Heart left ventricle (tissue), 16 donors: ENCODE measurements at regions of chr11 and their contacts with region 1.

Region 1: GRCh38 chr11:363948-364761 is 5.1 kb upstream of the B4GALNT4 start:
- DNase-seq: no peak
- ATAC-seq: peak in 3 of 4 donors; percentile 23 to 46 (median 24)
- H3K4me3 ChIP-seq: no peak overlapping the region
- H3K27ac ChIP-seq: no peak overlapping the region
- H3K4me1 ChIP-seq: peaks cover 0 to 11% (median 6%) of the 10 kb centered on the region in 12 donors
- H3K27me3 ChIP-seq: peaks cover 11 to 62% (median 42%) of the 10 kb centered on the region in 9 donors
- CTCF ChIP-seq: peak in 1 of 12 donors; percentile 19
- POLR2A ChIP-seq: no peak

Region 2: DNA sequence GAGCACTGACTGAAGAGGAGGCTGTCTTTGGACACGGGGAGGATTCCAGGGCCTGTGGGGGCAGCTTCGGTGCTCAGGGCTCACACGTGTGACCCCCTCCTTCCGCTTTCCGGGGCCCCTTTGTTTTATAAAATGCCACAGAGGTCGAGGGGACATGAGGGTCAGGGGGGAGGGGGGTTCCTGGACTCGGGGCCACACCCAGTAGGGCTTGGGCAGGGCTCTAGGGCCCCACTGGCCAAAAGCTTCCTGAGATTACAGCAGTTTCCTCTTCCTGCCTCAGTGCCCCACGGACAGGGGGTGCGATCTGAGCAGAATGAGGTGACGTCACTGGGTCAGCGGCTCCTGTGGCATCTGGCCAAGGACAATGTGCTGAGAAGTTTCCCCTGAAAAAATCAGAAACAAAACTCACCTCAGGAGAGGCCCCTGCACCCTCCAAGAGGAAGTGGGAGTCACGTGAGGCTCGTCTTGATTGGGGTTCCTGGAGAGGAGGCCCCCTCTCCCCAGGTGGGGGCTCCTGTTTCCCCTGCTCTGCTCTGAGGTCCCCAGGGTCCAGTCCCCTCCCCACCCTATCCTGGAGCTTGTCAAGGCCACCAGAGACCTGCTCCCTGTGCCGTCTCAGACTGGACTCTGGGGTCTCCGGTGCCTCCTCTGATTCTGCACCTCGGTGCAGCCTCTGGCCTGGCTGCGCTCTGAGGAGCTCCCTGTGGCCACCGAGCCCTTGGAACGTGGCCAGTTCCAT is 37.1 kb before region 1 on chr11:
- intact Hi-C with region 1: no loop called
- DNase-seq: peak; percentile 89 to 92 (median 90)
- ATAC-seq: peak; percentile 84 to 95 (median 90)
- H3K4me3 ChIP-seq: peak overlapping the region in 9 of 12 donors; percentile 4 to 31 (median 27)
- H3K27ac ChIP-seq: peak overlapping the region; percentile 89 to 99 (median 94)
- H3K4me1 ChIP-seq: peaks cover 3 to 76% (median 34%) of the 10 kb centered on the region in 12 donors
- H3K27me3 ChIP-seq: no peaks in the 10 kb centered on the region
- CTCF ChIP-seq: peak in 1 of 12 donors; percentile 4
- POLR2A ChIP-seq: peak in 1 of 2 donors; percentile 33

Region 3: GRCh38 chr11:416757-417621 is 52.8 kb after region 1 on chr11:
- intact Hi-C with region 1: no loop called
- DNase-seq: peak; percentile 60 to 83 (median 66)
- ATAC-seq: peak in 3 of 4 donors; percentile 65 to 67 (median 66)
- H3K4me3 ChIP-seq: peak overlapping the region; percentile 48 to 80 (median 64)
- H3K27ac ChIP-seq: peak overlapping the region; percentile 76 to 97 (median 92)
- H3K4me1 ChIP-seq: peaks cover 0 to 31% (median 13%) of the 10 kb centered on the region in 12 donors
- H3K27me3 ChIP-seq: peaks cover 4 to 60% (median 30%) of the 10 kb centered on the region in 9 donors
- CTCF ChIP-seq: no peak
- POLR2A ChIP-seq: peak in 1 of 2 donors; percentile 29

Region 4: DNA sequence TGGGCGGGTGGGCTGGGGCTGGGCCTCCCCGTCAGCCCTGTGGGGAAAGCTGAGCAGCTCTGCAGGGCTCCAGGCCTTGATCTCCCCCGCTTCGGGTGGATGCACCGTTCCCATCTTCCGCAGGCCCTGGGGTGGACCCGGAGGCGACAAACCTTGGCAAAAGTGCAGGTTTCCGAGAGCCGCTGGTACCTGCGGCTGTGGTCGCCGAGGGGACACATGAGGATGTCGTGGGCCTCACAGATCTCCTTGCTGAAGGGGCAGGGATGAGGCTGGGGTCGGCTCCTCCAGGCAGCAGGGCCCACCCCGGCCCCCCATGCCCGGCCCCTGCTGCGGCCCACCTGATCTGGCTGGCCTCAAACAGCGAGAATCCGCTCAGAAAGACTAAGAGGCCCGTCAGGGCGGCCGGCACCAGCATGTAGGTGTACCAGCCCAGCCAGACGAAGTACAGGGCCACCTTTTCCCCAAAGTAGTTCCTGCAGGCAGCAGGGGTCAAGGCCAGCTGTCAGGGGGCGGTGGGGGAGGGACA is 65.8 kb after region 1 on chr11:
- intact Hi-C with region 1: loop called in 1 of 10 experiments (anchors 10 kb)
- DNase-seq: peak in 2 of 5 donors; percentile 11 to 15
- ATAC-seq: no peak
- H3K4me3 ChIP-seq: no peak overlapping the region
- H3K27ac ChIP-seq: no peak overlapping the region
- H3K4me1 ChIP-seq: no peaks in the 10 kb centered on the region
- H3K27me3 ChIP-seq: peaks cover 0 to 25% (median 0%) of the 10 kb centered on the region in 9 donors
- CTCF ChIP-seq: no peak
- POLR2A ChIP-seq: no peak